Transverse colon (tissue), 4 donors: ENCODE measurements at regions of chr21 and their contacts with region 1.

Region 1: DNA sequence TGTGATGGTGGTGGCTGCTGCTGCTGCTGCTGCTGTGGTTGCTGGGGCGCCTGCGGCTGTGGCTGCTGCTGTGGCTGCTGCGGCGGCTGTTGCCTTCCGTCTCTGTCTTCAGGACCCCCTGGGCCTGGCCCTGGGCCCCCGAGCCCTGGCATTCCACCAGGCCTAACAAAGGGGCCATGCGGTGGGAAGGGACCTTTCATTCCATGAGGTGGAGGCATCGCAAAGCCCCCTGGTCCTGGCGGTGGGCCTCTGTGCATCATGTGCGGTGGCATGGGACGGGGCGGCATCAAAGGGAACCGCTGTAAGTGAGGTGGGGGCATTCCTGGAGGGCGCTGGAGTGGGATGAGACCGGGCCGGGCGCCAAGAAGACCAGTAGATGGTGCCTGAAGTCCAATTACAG is 12.4 kb downstream of the SOD1 start:
- DNase-seq: no peak
- H3K4me3 ChIP-seq: no peak overlapping the region
- H3K27ac ChIP-seq: no peak overlapping the region
- H3K4me1 ChIP-seq: peaks cover 0 to 18% (median 4%) of the 10 kb centered on the region in 4 donors
- H3K27me3 ChIP-seq: no peaks in the 10 kb centered on the region
- CTCF ChIP-seq: no peak
- EP300 ChIP-seq: no peak
- POLR2A ChIP-seq: no peak

Region 2: GRCh38 chr21:31728955-31729354 is 57.0 kb after region 1 on chr21:
- in situ Hi-C with region 1: no loop called
- intact Hi-C with region 1: loop called (anchors 2 kb)
- DNase-seq: no peak
- H3K4me3 ChIP-seq: no peak overlapping the region
- H3K27ac ChIP-seq: no peak overlapping the region
- H3K4me1 ChIP-seq: peaks cover 19 to 63% (median 38%) of the 10 kb centered on the region in 4 donors
- H3K27me3 ChIP-seq: no peaks in the 10 kb centered on the region
- CTCF ChIP-seq: no peak
- EP300 ChIP-seq: no peak
- POLR2A ChIP-seq: no peak